HepG2 (cell line): ENCODE measurements at regions of chr15 and their contacts with region 1.

Region 1: GRCh38 chr15:38354315-38354929 is 99.5 kb upstream of the FAM98B start:
- DNase-seq: peak; percentile 60
- ATAC-seq: peak; percentile 82
- H3K4me3 ChIP-seq: no peak overlapping the region
- H3K27ac ChIP-seq: no peak overlapping the region
- H3K4me1 ChIP-seq: no peaks in the 10 kb centered on the region
- H3K27me3 ChIP-seq: no peaks in the 10 kb centered on the region
- CTCF ChIP-seq: peak; percentile 72
- EP300 ChIP-seq: no peak
- POLR2A ChIP-seq: no peak
- RAD21 ChIP-seq: peak; percentile 58; the same call in 1 of the 2 replicates

Region 2: GRCh38 chr15:37995461-37996347 is 358.7 kb before region 1 on chr15:
- CTCF ChIA-PET with region 1: interaction called, 5 read pairs
- POLR2A ChIA-PET with region 1: no interaction called
- in situ Hi-C with region 1: loop called (anchors 5 kb)
- intact Hi-C with region 1: loop called (anchors 1 kb)
- DNase-seq: peak; percentile 18
- ATAC-seq: peak; percentile 41; the same call in 1 of the 3 replicates
- H3K4me3 ChIP-seq: no peak overlapping the region
- H3K27ac ChIP-seq: no peak overlapping the region
- H3K4me1 ChIP-seq: no peaks in the 10 kb centered on the region
- H3K27me3 ChIP-seq: no peaks in the 10 kb centered on the region; a peak in 2 of 5 replicates
- CTCF ChIP-seq: peak; percentile 61
- EP300 ChIP-seq: no peak
- POLR2A ChIP-seq: no peak
- RAD21 ChIP-seq: no peak

Region 3: DNA sequence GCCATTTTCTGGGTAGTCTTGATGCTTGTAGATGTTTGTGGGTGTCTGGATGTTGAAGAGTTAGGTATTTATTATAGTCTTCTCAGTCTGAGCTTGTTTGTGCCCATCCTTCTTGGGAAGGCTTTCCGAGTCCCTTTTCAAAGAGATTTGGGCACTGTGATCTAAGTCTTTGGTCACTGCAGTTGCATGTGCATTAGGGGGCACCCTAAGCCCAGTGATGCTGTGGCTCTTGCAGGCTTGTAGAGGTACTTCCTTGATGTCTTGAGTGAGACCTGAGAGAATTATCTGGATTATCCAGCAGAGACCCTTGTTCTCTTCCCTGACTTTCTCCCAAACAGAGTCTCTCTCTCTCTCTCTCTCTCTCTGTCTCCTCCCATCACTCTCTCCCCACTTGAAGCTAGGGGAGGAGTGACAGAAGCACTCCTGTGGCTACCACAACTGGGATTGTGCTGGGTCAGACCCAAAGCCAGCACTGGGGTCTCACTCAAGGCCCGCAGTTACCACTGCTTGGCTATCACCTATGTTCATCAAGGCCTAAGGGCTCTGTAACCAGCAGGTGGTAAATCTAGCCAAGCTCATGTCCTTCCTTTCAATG is 351.4 kb before region 1 on chr15:
- CTCF ChIA-PET with region 1: interaction called, 20 read pairs
- POLR2A ChIA-PET with region 1: no interaction called
- in situ Hi-C with region 1: loop called (anchors 5 kb)
- intact Hi-C with region 1: loop called (anchors 1 kb)
- DNase-seq: peak; percentile 49
- ATAC-seq: peak; percentile 85
- H3K4me3 ChIP-seq: no peak overlapping the region
- H3K27ac ChIP-seq: no peak overlapping the region
- H3K4me1 ChIP-seq: no peaks in the 10 kb centered on the region
- H3K27me3 ChIP-seq: no peaks in the 10 kb centered on the region
- CTCF ChIP-seq: peak; percentile 77
- EP300 ChIP-seq: no peak
- POLR2A ChIP-seq: no peak
- RAD21 ChIP-seq: peak; percentile 58

Region 4: GRCh38 chr15:38072348-38073177 is 281.9 kb before region 1 on chr15:
- CTCF ChIA-PET with region 1: no interaction called
- POLR2A ChIA-PET with region 1: no interaction called
- in situ Hi-C with region 1: loop called (anchors 5 kb)
- intact Hi-C with region 1: loop called (anchors 1 kb)
- DNase-seq: peak; percentile 75
- ATAC-seq: peak; percentile 98
- H3K4me3 ChIP-seq: peak overlapping the region; percentile 56 to 81 (median 62)
- H3K27ac ChIP-seq: peak overlapping the region; percentile 89
- H3K4me1 ChIP-seq: peaks cover 15% of the 10 kb centered on the region
- H3K27me3 ChIP-seq: no peaks in the 10 kb centered on the region; a peak in 1 of 5 replicates
- CTCF ChIP-seq: peak; percentile 51
- EP300 ChIP-seq: no peak
- POLR2A ChIP-seq: peak; percentile 46 to 47; a peak in 3 of 4 replicates
- RAD21 ChIP-seq: no peak

Region 5: GRCh38 chr15:38252481-38253412 is 101.7 kb before region 1 on chr15 and contains the start of gene SPRED1:
- CTCF ChIA-PET with region 1: interaction called, 6 read pairs
- POLR2A ChIA-PET with region 1: no interaction called
- in situ Hi-C with region 1: no loop called
- intact Hi-C with region 1: loop called (anchors 1 kb)
- DNase-seq: peak; percentile 14
- ATAC-seq: peak; percentile 66
- H3K4me3 ChIP-seq: peak within 1 kb of the TSS; percentile 78 to 84 (median 82)
- H3K27ac ChIP-seq: peak within 1 kb of the TSS; percentile 97
- H3K4me1 ChIP-seq: peaks cover 34% of the 10 kb centered on the region
- H3K27me3 ChIP-seq: no peaks in the 10 kb centered on the region; a peak in 1 of 5 replicates
- CTCF ChIP-seq: no peak
- EP300 ChIP-seq: no peak
- POLR2A ChIP-seq: no peak; a peak in 1 of 4 replicates
- RAD21 ChIP-seq: no peak
- total RNA-seq, gene SPRED1: 9.4 and 9.6 TPM in 2 replicates

Region 6: DNA sequence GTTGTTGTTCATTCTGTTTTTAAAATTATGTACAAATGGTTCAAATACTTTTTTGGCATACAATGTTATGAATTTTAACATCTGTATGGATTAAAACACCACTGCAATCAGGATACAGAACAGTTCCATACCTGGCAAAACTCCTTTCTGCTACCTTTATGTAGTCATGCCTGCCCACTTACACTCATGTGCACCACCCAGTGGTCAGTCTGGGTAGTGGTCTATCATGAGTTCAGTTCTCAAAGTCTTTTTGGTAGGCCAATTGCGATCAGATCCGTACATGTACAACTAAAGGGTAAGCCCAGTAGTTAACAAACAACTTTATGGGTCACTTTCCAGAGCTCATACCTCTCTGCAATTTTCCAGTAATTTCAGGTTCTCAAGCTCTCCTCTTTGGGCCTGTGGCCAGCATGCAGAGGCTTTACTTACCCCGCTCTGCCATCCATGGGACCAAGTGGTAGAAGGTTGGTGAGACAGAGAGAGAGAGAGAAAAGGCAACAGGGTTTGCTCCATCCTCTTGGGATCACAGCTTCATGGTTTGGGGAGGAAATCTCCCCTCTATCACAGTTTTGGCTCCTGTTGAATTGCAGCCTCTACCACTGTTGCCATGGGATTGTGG is 35.6 kb after region 1 on chr15:
- CTCF ChIA-PET with region 1: no interaction called
- POLR2A ChIA-PET with region 1: no interaction called
- in situ Hi-C with region 1: no loop called
- intact Hi-C with region 1: loop called (anchors 1 kb)
- DNase-seq: peak; percentile 58
- ATAC-seq: peak; percentile 89
- H3K4me3 ChIP-seq: no peak overlapping the region
- H3K27ac ChIP-seq: no peak overlapping the region
- H3K4me1 ChIP-seq: no peaks in the 10 kb centered on the region
- H3K27me3 ChIP-seq: no peaks in the 10 kb centered on the region; a peak in 1 of 5 replicates
- CTCF ChIP-seq: peak; percentile 82
- EP300 ChIP-seq: no peak
- POLR2A ChIP-seq: no peak
- RAD21 ChIP-seq: no peak